ENCODE measurements at regions of chr7 and their contacts with region 1.

Region 1: DNA sequence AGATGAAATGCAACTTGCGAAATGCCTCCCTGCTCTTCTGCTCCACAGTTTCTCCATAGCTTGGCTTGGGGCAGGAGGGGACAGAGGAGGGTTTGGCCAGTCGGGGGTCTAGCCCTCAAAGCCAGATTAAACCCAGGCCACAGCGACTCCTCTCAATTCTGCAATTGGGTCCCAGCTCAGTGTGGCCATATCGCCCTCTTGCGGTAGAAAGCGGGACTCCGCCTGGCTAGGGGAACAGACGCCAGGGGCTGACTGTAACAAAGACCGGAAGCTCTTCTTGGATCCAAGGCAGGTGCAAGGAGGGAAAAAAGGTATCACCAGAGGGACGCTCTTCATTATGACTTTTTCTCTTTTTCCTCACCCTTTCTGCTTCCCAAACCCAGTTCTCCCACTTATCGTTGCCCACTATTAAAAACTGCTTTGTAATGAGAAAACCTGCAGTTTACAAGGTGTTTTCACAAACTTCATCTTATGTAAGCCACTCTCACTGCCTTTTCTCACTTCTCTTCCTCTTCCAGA is 36.6 kb upstream of the TNPO3 start:
- DNase-seq: peak; percentile 83 to 100
- H3K4me3 ChIP-seq: no peak overlapping the region
- H3K27ac ChIP-seq: no peak overlapping the region
- H3K4me1 ChIP-seq: no peaks in the 10 kb centered on the region
- H3K27me3 ChIP-seq: no peaks in the 10 kb centered on the region
- CTCF ChIP-seq: peak; percentile 98 to 99 (median 99)
- EP300 ChIP-seq: no peak
- POLR2A ChIP-seq: no peak
- RAD21 ChIP-seq: peak; percentile 99 to 100

Region 2: DNA sequence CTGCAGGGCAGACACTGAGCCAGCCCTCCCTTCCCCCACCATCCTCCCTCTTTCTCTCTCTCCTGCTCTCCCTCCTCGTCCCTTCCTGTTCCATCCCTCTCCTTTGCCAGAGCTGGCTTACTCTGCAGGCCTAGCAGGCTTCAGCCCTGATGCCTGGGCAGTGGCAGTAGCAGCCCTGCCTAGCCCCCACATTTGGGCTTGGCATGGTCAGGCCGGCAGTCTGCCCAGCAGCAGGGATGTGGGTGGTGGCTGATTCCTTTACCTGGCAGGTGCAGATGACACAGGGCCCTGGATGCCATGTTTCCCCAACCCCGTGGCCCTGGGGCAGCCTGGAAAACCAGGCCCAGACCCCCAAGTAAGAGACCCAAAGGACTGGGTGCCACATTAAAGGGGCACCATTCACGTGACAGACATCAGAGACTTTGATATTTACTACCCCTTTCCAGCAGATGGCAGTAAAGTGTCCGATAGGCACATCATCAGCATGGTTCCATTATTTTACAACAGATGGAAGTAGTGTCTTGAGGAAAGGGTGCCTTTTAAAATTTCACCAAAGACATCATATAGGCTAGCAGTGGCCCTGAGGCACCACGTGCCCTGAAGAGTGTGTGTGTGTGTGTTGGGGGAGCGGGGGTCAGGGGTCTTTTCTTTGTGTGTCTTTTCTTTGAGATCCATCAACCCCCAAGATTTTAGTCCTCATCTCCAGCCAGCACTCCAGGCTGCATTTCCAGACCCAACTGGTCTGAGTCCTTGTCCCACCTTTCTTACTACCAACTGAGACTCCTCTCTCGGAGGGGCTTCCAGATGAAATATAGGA is 187.0 kb before region 1 on chr7:
- CTCF ChIA-PET with region 1: interaction called, 20 read pairs
- POLR2A ChIA-PET with region 1: no interaction called
- DNase-seq: peak in 1 of 2 experiments; percentile 54
- H3K4me3 ChIP-seq: no peak overlapping the region
- H3K27ac ChIP-seq: no peak overlapping the region
- H3K4me1 ChIP-seq: peaks cover 2 to 9% (median 5%) of the 10 kb centered on the region in 4 experiments; a peak in 5 of 7 replicates
- H3K27me3 ChIP-seq: peaks cover 0 to 12% (median 10%) of the 10 kb centered on the region in 4 experiments; a peak in 5 of 7 replicates
- CTCF ChIP-seq: peak in 2 of 3 experiments; percentile 65; a peak in 3 of 4 replicates
- EP300 ChIP-seq: no peak
- POLR2A ChIP-seq: no peak
- RAD21 ChIP-seq: peak; percentile 71

Region 3: DNA sequence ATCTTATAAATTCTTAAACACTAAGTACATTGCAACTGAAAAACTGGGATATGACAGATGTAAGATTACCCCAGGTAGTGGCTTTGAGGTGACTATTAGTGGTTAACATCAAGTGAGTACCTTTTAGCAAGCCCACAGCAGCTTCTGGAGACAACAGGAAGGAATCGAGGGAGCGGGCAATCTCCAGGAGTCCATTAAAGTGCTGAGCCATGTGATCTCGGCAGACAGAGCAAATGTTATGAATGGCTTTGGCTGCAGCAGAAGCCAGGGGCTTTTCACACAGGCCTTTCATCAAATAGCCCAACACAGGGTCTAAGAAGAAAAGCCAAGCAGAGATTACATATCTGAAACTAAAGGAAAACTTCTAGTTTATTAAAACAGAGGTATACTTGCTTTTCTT is 104.9 kb before region 1 on chr7:
- CTCF ChIA-PET with region 1: interaction called, 10 read pairs
- POLR2A ChIA-PET with region 1: no interaction called
- DNase-seq: no peak
- H3K4me3 ChIP-seq: no peak overlapping the region
- H3K27ac ChIP-seq: no peak overlapping the region
- H3K4me1 ChIP-seq: peaks cover 0 to 3% (median 1%) of the 10 kb centered on the region in 4 experiments; a peak in 2 of 7 replicates
- H3K27me3 ChIP-seq: no peaks in the 10 kb centered on the region
- CTCF ChIP-seq: no peak
- EP300 ChIP-seq: no peak
- POLR2A ChIP-seq: no peak
- RAD21 ChIP-seq: no peak

Region 4: DNA sequence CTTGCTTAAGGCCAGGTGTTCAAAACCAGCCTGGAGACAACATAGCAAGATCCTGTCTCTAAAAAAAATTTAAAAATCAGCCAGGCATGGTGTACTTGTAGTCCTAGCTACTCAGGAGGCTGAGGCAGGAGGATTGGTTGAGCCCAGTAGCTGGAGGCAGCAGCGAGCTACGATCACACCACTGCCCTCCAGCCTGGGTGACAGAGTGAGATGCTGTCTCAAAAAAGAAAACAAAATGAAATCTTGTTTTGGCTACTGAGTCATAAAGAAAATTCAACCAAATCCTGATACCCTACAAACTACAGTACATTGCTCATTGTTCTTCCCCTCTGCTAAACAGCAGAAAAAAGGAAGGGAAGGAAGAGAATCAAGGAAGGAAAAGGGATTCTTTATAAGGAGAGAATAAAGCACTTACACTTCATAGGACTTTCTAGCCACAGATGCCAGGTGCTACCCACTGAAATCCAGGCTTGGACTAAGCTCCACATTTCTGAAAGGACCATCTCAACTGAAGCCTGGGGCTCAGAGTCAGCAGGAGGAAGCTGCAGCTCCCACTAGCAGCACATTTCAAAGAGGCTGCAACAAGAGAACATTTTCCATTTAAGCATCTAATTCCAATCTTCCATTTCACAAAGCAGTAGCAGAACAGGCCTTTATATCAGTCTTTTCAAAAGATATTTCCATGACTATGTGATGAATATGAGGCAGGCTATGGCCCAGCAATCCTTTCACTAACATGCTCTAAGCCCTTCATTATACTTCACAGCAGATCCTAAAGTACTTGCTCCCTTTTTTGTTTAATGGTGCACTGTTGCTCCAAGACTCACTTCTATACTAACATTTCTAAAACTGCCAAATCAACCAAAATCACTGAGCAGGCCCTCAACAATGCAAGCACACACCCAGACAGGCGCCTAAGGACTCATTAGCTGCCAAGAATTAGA is 50.1 kb before region 1 on chr7:
- CTCF ChIA-PET with region 1: interaction called, 13 read pairs
- POLR2A ChIA-PET with region 1: no interaction called
- DNase-seq: no peak
- H3K4me3 ChIP-seq: 0 out of 8 replicates have a peak overlapping the region, but pooled peaks of 1 of the 4 experiments have one; percentile 21
- H3K27ac ChIP-seq: no peak overlapping the region
- H3K4me1 ChIP-seq: peaks cover 3 to 16% (median 6%) of the 10 kb centered on the region in 4 experiments; a peak in 6 of 7 replicates
- H3K27me3 ChIP-seq: no peaks in the 10 kb centered on the region
- CTCF ChIP-seq: no peak
- EP300 ChIP-seq: no peak
- POLR2A ChIP-seq: no peak
- RAD21 ChIP-seq: no peak

Region 5: GRCh38 chr7:129101746-129102145 is 10.2 kb after region 1 on chr7:
- CTCF ChIA-PET with region 1: interaction called, 30 read pairs
- POLR2A ChIA-PET with region 1: no interaction called
- DNase-seq: no peak
- H3K4me3 ChIP-seq: no peak overlapping the region
- H3K27ac ChIP-seq: no peak overlapping the region
- H3K4me1 ChIP-seq: no peaks in the 10 kb centered on the region
- H3K27me3 ChIP-seq: no peaks in the 10 kb centered on the region
- CTCF ChIP-seq: no peak
- EP300 ChIP-seq: no peak
- POLR2A ChIP-seq: no peak
- RAD21 ChIP-seq: no peak

Region 6: GRCh38 chr7:129210256-129210988 is 118.9 kb after region 1 on chr7:
- CTCF ChIA-PET with region 1: interaction called, 13 read pairs
- POLR2A ChIA-PET with region 1: no interaction called
- DNase-seq: peak; percentile 41 to 98
- H3K4me3 ChIP-seq: no peak overlapping the region
- H3K27ac ChIP-seq: no peak overlapping the region
- H3K4me1 ChIP-seq: no peaks in the 10 kb centered on the region
- H3K27me3 ChIP-seq: no peaks in the 10 kb centered on the region
- CTCF ChIP-seq: peak; percentile 93 to 97 (median 94)
- EP300 ChIP-seq: no peak
- POLR2A ChIP-seq: no peak
- RAD21 ChIP-seq: peak; percentile 93 to 96